ENCODE measurements at regions of chr4 and their contacts with region 1.

Region 1: GRCh38 chr4:59258002-59258401 is 1942.1 kb upstream of the ADGRL3 start:
- DNase-seq: no peak
- ATAC-seq: no peak
- H3K4me3 Mint-ChIP-seq: no peak overlapping the region
- H3K27ac Mint-ChIP-seq: no peak overlapping the region
- H3K4me1 Mint-ChIP-seq: no peaks in the 10 kb centered on the region
- H3K27me3 Mint-ChIP-seq: no peaks in the 10 kb centered on the region

Region 2: DNA sequence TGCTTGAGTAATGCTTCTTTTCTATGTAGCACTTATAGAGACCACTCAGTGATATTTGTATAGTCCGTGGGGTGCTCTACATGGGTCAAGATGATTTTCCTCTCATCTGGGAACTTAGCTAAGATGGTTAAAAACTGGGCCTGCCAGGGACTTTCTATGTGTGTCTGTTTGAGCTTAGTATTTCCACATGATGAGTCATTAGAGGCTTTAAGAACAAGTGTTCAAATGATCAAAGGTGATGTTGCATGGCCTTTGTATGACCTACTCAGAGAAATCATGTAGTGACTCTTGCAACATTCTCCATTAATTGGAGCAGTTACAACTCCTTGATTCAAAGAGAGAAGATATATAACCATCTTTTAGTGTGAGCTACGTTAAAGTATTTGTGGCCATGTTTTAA is 667.3 kb before region 1 on chr4:
- CTCF ChIA-PET with region 1: no interaction called
- POLR2A ChIA-PET with region 1: no interaction called
- intact Hi-C with region 1: no loop called
- DNase-seq: no peak
- ATAC-seq: no peak
- H3K4me3 Mint-ChIP-seq: no peak overlapping the region
- H3K27ac Mint-ChIP-seq: no peak overlapping the region
- H3K4me1 Mint-ChIP-seq: no peaks in the 10 kb centered on the region
- H3K27me3 Mint-ChIP-seq: no peaks in the 10 kb centered on the region

Region 3: GRCh38 chr4:58658701-58659100 is 599.3 kb before region 1 on chr4:
- CTCF ChIA-PET with region 1: no interaction called
- POLR2A ChIA-PET with region 1: interaction called, 17 read pairs
- intact Hi-C with region 1: no loop called
- DNase-seq: no peak
- ATAC-seq: no peak
- H3K4me3 Mint-ChIP-seq: no peak overlapping the region
- H3K27ac Mint-ChIP-seq: no peak overlapping the region
- H3K4me1 Mint-ChIP-seq: no peaks in the 10 kb centered on the region
- H3K27me3 Mint-ChIP-seq: no peaks in the 10 kb centered on the region

Measured in activated CD4-positive, alpha-beta T cell treated with anti-CD3 and anti-CD28 coated beads for 36 hours (primary cell).